PC-9 (cell line): ENCODE measurements at regions of chr9 and their contacts with region 1.

Region 1: GRCh38 chr9:111759762-111760639 is 34.7 kb downstream of the SHOC1 start:
- DNase-seq: peak; percentile 53 to 73
- H3K4me3 ChIP-seq: no peak overlapping the region
- H3K27ac ChIP-seq: no peak overlapping the region
- H3K4me1 ChIP-seq: peaks cover 6% of the 10 kb centered on the region; the same call in 1 of the 2 replicates
- H3K27me3 ChIP-seq: no peaks in the 10 kb centered on the region
- CTCF ChIP-seq: peak; percentile 81

Region 2: DNA sequence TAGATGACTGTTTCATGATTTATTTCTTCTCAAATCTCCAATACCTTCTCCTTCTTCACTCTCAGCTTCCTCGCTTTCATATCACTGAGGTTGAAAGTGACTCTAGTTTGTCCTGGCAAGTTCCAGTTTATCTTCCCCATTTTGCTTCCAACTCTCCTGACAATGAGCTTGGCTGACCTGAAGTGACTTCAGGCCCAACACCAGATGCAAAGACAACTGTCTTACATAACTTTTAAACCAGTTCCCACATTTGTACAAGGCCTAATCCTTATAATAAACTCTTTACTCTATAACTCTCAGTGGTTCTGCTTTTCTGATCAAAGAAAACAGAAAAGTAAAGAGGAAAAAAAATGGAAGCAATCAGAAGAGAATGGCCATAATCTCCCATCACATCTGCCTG is 76.6 kb before region 1 on chr9:
- CTCF ChIA-PET with region 1: no interaction called
- POLR2A ChIA-PET with region 1: no interaction called
- intact Hi-C with region 1: no loop called
- DNase-seq: no peak
- H3K4me3 ChIP-seq: no peak overlapping the region
- H3K27ac ChIP-seq: no peak overlapping the region
- H3K4me1 ChIP-seq: no peaks in the 10 kb centered on the region
- H3K27me3 ChIP-seq: no peaks in the 10 kb centered on the region
- CTCF ChIP-seq: no peak

Region 3: GRCh38 chr9:111851566-111851965 is 91.6 kb after region 1 on chr9:
- CTCF ChIA-PET with region 1: no interaction called
- POLR2A ChIA-PET with region 1: no interaction called
- intact Hi-C with region 1: loop called (anchors 2 kb)
- DNase-seq: peak; percentile 84 to 97
- H3K4me3 ChIP-seq: no peak overlapping the region
- H3K27ac ChIP-seq: peak overlapping the region; percentile 82
- H3K4me1 ChIP-seq: peaks cover 47% of the 10 kb centered on the region
- H3K27me3 ChIP-seq: no peaks in the 10 kb centered on the region
- CTCF ChIP-seq: no peak

Region 4: GRCh38 chr9:111937781-111938426 is 177.9 kb after region 1 on chr9:
- CTCF ChIA-PET with region 1: no interaction called
- POLR2A ChIA-PET with region 1: no interaction called
- intact Hi-C with region 1: loop called (anchors 5 kb)
- DNase-seq: no peak
- H3K4me3 ChIP-seq: no peak overlapping the region
- H3K27ac ChIP-seq: no peak overlapping the region
- H3K4me1 ChIP-seq: no peaks in the 10 kb centered on the region
- H3K27me3 ChIP-seq: no peaks in the 10 kb centered on the region
- CTCF ChIP-seq: no peak

Region 5: DNA sequence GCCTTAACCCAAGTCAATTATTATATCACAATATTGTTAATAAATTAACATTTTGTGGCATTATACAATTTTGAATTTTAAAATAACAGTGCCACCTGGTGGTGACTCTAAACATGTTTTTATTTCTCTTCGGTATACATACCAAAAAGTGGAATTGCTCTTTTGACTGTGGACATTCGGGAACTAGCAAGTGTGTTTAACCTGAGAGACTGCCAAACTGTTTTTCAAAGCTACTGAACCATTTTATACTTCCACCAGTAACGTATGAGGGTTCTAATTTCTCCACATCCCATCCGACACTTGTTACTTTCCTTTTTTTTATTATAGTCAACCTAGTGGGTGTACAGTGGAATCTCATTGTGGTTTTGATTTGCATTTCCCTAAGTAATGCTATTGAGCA is 601.6 kb after region 1 on chr9:
- CTCF ChIA-PET with region 1: no interaction called
- POLR2A ChIA-PET with region 1: no interaction called
- intact Hi-C with region 1: loop called (anchors 10 kb)
- DNase-seq: peak in 1 of 2 experiments; percentile 53
- H3K4me3 ChIP-seq: no peak overlapping the region
- H3K27ac ChIP-seq: no peak overlapping the region
- H3K4me1 ChIP-seq: peaks cover 11% of the 10 kb centered on the region; the same call in 1 of the 2 replicates
- H3K27me3 ChIP-seq: no peaks in the 10 kb centered on the region
- CTCF ChIP-seq: peak; percentile 78